Dendritic cell treated with granulocyte-macrophage colony-stimulating factor and Interleukin-4, amounts not matched to agents 40 ng/mL and 50 ng/mL, for 4 days (primary cell): ENCODE measurements at regions of chr6 and their contacts with region 1.

Region 1: GRCh38 chr6:99425647-99426453 is 742 bp upstream of the PNISR start:
- H3K4me3 Mint-ChIP-seq: peak overlapping the region; percentile 97
- H3K27ac Mint-ChIP-seq: peak overlapping the region; percentile 97
- H3K4me1 Mint-ChIP-seq: peaks cover 46% of the 10 kb centered on the region
- H3K27me3 Mint-ChIP-seq: no peaks in the 10 kb centered on the region

Region 2: DNA sequence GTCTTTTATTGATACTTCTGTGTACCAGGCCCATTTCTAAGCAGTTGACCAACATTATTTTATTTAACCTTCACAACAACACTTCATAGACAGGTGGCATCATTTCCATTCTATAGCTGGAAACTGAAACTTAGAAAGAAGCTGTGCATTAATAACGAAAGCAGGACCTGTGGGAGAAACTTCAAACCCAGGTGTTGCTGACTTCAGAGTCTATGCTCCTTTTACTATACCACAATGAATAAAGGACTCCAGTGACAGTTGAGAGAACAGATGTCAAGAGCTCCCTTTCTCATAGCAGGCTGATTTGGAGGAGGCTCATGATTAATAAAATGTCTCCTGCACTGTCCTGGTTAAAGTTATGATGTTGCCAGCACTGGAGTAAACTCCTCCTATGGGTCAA is 648.1 kb before region 1 on chr6:
- intact Hi-C with region 1: no loop called
- H3K4me3 Mint-ChIP-seq: no peak overlapping the region
- H3K27ac Mint-ChIP-seq: no peak overlapping the region
- H3K4me1 Mint-ChIP-seq: no peaks in the 10 kb centered on the region
- H3K27me3 Mint-ChIP-seq: peaks cover 2% of the 10 kb centered on the region

Region 3: GRCh38 chr6:99330159-99330558 is 95.7 kb before region 1 on chr6:
- intact Hi-C with region 1: loop called (anchors 10 kb)
- H3K4me3 Mint-ChIP-seq: no peak overlapping the region
- H3K27ac Mint-ChIP-seq: no peak overlapping the region
- H3K4me1 Mint-ChIP-seq: no peaks in the 10 kb centered on the region
- H3K27me3 Mint-ChIP-seq: peaks cover 4% of the 10 kb centered on the region

Region 4: GRCh38 chr6:99393698-99394531 is 31.9 kb before region 1 on chr6 and contains the start of gene COQ3:
- intact Hi-C with region 1: loop called (anchors 2 kb)
- H3K4me3 Mint-ChIP-seq: peak within 1 kb of the TSS; percentile 97
- H3K27ac Mint-ChIP-seq: peak within 1 kb of the TSS; percentile 96
- H3K4me1 Mint-ChIP-seq: no peaks in the 10 kb centered on the region
- H3K27me3 Mint-ChIP-seq: no peaks in the 10 kb centered on the region

Region 5: DNA sequence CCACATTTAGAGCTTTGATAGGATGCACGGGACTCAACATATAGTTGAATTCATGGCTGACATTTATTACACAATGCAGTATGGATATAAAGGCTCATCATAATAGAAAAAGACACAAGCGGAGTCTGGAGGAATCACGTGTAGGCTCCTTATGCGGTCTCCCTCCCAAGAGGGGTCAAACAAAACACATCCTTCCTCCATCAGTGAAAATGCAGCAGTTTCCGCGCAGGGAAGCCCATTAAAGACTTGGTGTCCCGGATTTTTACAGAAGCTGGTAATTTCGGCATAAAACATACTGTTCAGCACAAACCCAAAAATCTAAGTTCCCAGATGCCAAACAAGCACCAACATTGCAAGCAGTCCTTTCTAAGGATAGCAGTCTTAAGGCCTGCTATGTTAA is 88.2 kb after region 1 on chr6:
- intact Hi-C with region 1: loop called (anchors 1 kb)
- H3K4me3 Mint-ChIP-seq: no peak overlapping the region
- H3K27ac Mint-ChIP-seq: no peak overlapping the region
- H3K4me1 Mint-ChIP-seq: peaks cover 19% of the 10 kb centered on the region
- H3K27me3 Mint-ChIP-seq: peaks cover 8% of the 10 kb centered on the region

Region 6: GRCh38 chr6:99568103-99568933 is 142.5 kb after region 1 on chr6 and contains the start of gene CCNC:
- intact Hi-C with region 1: loop called (anchors 2 kb)
- H3K4me3 Mint-ChIP-seq: peak within 1 kb of the TSS; percentile 90
- H3K27ac Mint-ChIP-seq: peak within 1 kb of the TSS; percentile 93
- H3K4me1 Mint-ChIP-seq: peaks cover 17% of the 10 kb centered on the region
- H3K27me3 Mint-ChIP-seq: no peaks in the 10 kb centered on the region